ENCODE measurements at regions of chr10 and their contacts with region 1.

Region 1: GRCh38 chr10:132458593-132459300 is 61.7 kb downstream of the PWWP2B start:
- DNase-seq: no peak
- H3K4me3 ChIP-seq: peak overlapping the region in 1 of 4 donors; percentile 3
- H3K27ac ChIP-seq: peak overlapping the region in 3 of 4 donors; percentile 10 to 63 (median 53)
- H3K4me1 ChIP-seq: peaks cover 15 to 54% (median 24%) of the 10 kb centered on the region in 3 donors
- H3K27me3 ChIP-seq: peaks cover 0 to 29% (median 0%) of the 10 kb centered on the region in 4 donors
- CTCF ChIP-seq: peak; percentile 93 to 99 (median 95)
- POLR2A ChIP-seq: no peak

Region 2: GRCh38 chr10:132223156-132223590 is 235.6 kb before region 1 on chr10:
- intact Hi-C with region 1: loop called (anchors 5 kb)
- DNase-seq: no peak
- H3K4me3 ChIP-seq: no peak overlapping the region
- H3K27ac ChIP-seq: no peak overlapping the region
- H3K4me1 ChIP-seq: peaks cover 0 to 8% (median 0%) of the 10 kb centered on the region in 3 donors
- H3K27me3 ChIP-seq: no peaks in the 10 kb centered on the region
- CTCF ChIP-seq: peak; percentile 54 to 95 (median 85)
- POLR2A ChIP-seq: no peak

Region 3: GRCh38 chr10:132536971-132537712 is 78.4 kb after region 1 on chr10:
- intact Hi-C with region 1: loop called (anchors 5 kb)
- DNase-seq: peak; percentile 99
- H3K4me3 ChIP-seq: peak overlapping the region; percentile 56 to 88 (median 68)
- H3K27ac ChIP-seq: peak overlapping the region; percentile 81 to 95 (median 86)
- H3K4me1 ChIP-seq: peaks cover 37 to 60% (median 43%) of the 10 kb centered on the region in 3 donors
- H3K27me3 ChIP-seq: no peaks in the 10 kb centered on the region
- CTCF ChIP-seq: peak in 4 of 6 experiments; percentile 27 to 57 (median 42)
- POLR2A ChIP-seq: peak in 3 of 4 donors; percentile 51 to 78 (median 58)